ENCODE measurements at regions of chr7 and their contacts with region 1.

Region 1: GRCh38 chr7:48875045-48875916 is 49.1 kb upstream of the CDC14C start:
- DNase-seq: peak; percentile 71
- H3K4me3 Mint-ChIP-seq: no peak overlapping the region
- H3K27ac Mint-ChIP-seq: no peak overlapping the region
- H3K4me1 Mint-ChIP-seq: peaks cover 8% of the 10 kb centered on the region
- H3K27me3 Mint-ChIP-seq: no peaks in the 10 kb centered on the region
- CTCF ChIP-seq: peak; percentile 58

Region 2: GRCh38 chr7:48139459-48139858 is 735.8 kb before region 1 on chr7:
- CTCF ChIA-PET with region 1: no interaction called
- intact Hi-C with region 1: loop called (anchors 5 kb)
- DNase-seq: peak; percentile 60
- H3K4me3 Mint-ChIP-seq: peak overlapping the region; percentile 9
- H3K27ac Mint-ChIP-seq: peak overlapping the region; percentile 9
- H3K4me1 Mint-ChIP-seq: peaks cover 32% of the 10 kb centered on the region
- H3K27me3 Mint-ChIP-seq: no peaks in the 10 kb centered on the region
- CTCF ChIP-seq: peak; percentile 60

Region 3: GRCh38 chr7:48337012-48337621 is 538.2 kb before region 1 on chr7:
- CTCF ChIA-PET with region 1: no interaction called
- intact Hi-C with region 1: loop called (anchors 2 kb)
- DNase-seq: peak; percentile 47
- H3K4me3 Mint-ChIP-seq: no peak overlapping the region
- H3K27ac Mint-ChIP-seq: no peak overlapping the region
- H3K4me1 Mint-ChIP-seq: no peaks in the 10 kb centered on the region
- H3K27me3 Mint-ChIP-seq: no peaks in the 10 kb centered on the region
- CTCF ChIP-seq: peak; percentile 78

Region 4: DNA sequence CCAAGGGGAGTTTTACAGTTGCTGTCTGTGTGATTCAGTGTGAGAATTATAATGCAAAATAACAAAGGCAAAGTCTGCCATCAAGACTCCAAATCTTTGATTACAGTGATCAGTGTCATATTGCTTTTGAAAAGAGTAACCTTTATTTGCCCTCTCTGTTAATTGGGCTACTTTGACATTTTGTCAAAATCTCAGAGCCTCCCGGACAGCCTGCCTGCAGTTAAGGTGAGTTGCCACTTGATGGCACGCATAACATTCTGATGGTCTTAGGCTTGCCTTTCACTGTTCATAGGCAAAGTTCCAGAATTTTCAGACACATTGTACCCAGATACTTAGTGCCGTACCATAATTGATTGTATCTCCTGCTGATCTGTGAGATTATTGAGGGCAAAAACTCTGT is 450.6 kb before region 1 on chr7:
- CTCF ChIA-PET with region 1: no interaction called
- intact Hi-C with region 1: loop called (anchors 1 kb)
- DNase-seq: peak; percentile 40
- H3K4me3 Mint-ChIP-seq: no peak overlapping the region
- H3K27ac Mint-ChIP-seq: no peak overlapping the region
- H3K4me1 Mint-ChIP-seq: peaks cover 21% of the 10 kb centered on the region
- H3K27me3 Mint-ChIP-seq: no peaks in the 10 kb centered on the region
- CTCF ChIP-seq: peak; percentile 63

Region 5: DNA sequence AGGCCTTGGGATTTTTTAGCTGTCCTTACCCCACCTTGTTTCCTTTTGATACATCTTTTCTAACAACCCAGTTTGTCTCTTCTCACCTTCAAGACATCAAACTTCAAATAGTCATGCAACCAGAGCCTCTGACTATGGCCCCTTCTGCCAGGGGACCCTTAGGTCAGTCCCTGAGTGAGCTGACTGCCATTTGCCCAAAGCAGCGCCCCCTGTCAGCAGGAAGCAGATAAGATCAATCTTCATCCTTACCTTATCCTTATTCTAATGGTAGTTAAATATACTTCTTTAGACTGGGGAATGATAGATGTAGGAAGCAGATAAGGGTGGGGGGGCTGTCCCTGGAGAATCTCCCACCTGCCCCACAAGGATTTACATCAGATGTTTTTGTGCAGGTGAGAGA is 19.3 kb after region 1 on chr7:
- CTCF ChIA-PET with region 1: no interaction called
- intact Hi-C with region 1: no loop called
- DNase-seq: no peak
- H3K4me3 Mint-ChIP-seq: no peak overlapping the region
- H3K27ac Mint-ChIP-seq: no peak overlapping the region
- H3K4me1 Mint-ChIP-seq: no peaks in the 10 kb centered on the region
- H3K27me3 Mint-ChIP-seq: no peaks in the 10 kb centered on the region
- CTCF ChIP-seq: no peak

Region 6: GRCh38 chr7:49852619-49853462 is 977.6 kb after region 1 on chr7:
- CTCF ChIA-PET with region 1: no interaction called
- intact Hi-C with region 1: loop called (anchors 10 kb)
- DNase-seq: peak; percentile 68
- H3K4me3 Mint-ChIP-seq: no peak overlapping the region
- H3K27ac Mint-ChIP-seq: no peak overlapping the region
- H3K4me1 Mint-ChIP-seq: peaks cover 19% of the 10 kb centered on the region
- H3K27me3 Mint-ChIP-seq: no peaks in the 10 kb centered on the region
- CTCF ChIP-seq: peak; percentile 88

Measured in Calu3 (cell line).